Right ventricle myocardium superior (tissue), 1 donor: ENCODE measurements at regions of chr5 and their contacts with region 1.

Region 1: GRCh38 chr5:141811287-141812155 is 66.7 kb downstream of the PCDH1 start:
- DNase-seq: no peak
- ATAC-seq: no peak

Region 2: DNA sequence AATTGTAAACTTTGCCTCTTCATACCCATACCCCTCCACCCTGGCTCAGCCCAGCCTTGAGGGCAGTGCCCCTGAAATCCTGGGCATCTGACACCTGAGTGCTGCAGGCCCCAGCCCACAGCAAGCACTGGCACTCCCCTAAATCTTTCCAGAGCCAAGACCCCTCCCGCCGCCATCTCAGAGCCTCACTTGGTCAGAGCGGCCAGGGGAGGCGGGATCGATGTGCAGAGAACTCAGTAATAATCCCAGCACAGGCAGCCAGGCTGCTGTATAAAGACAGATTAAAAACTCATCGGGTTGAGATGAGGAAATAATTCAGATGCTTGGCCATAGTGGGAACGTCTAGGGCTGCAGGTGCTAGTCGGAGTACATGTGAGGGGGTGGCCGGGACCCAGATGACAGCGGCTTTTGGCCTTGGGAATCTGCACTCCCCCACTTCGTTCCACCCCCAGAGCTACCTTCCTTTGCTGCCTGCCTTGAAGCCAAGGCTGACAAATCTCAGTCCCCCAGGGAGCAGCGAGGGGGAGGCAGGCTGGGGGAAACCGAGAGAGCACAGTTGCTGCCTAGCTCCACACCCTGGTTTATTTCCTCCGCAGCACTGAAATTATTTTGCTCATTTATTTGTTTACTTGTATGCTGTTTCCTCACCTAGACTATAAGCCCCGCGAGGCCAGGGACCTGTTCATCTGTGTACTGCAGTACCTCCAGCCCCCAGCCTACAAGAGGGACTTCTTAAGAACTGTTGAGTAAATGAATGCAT is 110.0 kb before region 1 on chr5:
- intact Hi-C with region 1: loop called (anchors 10 kb)
- DNase-seq: no peak
- ATAC-seq: peak; percentile 11